MCF 10A (cell line): ENCODE measurements at regions of chr11 and their contacts with region 1.

Region 1: DNA sequence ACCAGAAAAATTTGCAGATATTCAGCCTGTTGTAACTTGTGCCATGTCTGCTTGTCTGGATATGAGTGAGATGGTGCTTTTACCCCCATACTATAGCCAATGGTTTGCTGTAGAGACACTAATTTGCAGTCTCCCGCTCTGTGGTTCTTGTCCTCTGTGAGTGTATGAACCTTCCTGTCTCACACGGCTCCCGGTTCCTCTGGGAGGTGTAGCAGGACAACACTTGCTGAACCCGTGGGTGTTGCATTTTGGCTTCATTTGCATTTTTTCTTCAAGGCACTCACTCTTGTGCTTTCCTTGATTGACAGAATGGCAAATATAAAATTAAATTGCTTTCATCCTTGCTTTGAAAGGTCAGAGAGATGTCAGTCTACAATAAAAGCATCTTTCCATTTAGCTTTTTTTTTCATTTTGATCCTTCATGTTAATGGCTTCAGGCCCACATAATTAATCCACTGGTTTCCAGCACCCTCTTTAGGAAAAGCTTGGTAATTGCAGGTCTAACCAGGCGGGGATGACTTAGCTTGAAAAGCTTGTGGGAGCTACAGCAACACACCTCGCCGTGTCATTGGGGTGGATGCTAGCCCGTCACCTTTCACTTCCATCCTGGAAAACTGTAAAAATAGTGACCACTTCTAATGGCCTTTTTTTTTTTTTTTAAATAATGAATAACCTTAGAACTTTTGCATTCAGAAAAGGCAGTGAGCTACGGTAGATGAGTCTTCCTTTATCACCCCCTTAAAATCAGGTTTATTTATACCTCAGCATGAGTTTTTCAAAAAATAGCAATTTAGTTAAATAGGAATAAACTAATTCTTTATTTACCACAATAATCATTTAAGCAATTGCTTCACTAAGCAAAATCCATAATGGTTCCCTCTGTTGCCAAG is 27.4 kb upstream of the ST14 start:
- DNase-seq: peak; percentile 78
- H3K4me3 Mint-ChIP-seq: no peak overlapping the region
- H3K27ac Mint-ChIP-seq: no peak overlapping the region
- H3K4me1 Mint-ChIP-seq: no peaks in the 10 kb centered on the region
- H3K27me3 Mint-ChIP-seq: no peaks in the 10 kb centered on the region
- CTCF ChIP-seq: peak; percentile 88

Region 2: DNA sequence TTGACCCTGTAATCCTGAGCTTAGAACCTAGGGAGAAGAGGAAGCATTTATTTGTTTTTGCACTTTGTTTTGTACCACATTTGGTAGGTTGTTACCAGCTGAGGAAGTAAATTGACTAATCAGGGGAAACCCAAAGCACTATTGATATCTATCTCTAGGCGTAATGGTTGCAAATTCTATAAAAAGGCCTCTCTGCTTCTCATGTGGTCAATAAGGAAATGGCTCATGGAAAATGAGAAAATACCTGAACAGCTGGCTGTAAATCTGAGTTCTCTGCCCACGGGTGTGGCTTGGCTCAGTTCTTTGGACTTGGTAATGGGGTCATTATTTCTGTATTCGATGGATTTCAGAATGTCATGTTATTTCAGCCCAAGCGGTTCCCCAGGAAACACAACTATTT is 714.2 kb before region 1 on chr11:
- CTCF ChIA-PET with region 1: no interaction called
- POLR2A ChIA-PET with region 1: no interaction called
- intact Hi-C with region 1: no loop called
- DNase-seq: no peak
- H3K4me3 Mint-ChIP-seq: no peak overlapping the region
- H3K27ac Mint-ChIP-seq: no peak overlapping the region
- H3K4me1 Mint-ChIP-seq: no peaks in the 10 kb centered on the region
- H3K27me3 Mint-ChIP-seq: no peaks in the 10 kb centered on the region
- CTCF ChIP-seq: no peak

Region 3: GRCh38 chr11:129853518-129854236 is 278.5 kb before region 1 on chr11:
- CTCF ChIA-PET with region 1: interaction called, 3 read pairs
- POLR2A ChIA-PET with region 1: no interaction called
- intact Hi-C with region 1: loop called (anchors 1 kb)
- DNase-seq: peak; percentile 91
- H3K4me3 Mint-ChIP-seq: peak overlapping the region; percentile 2
- H3K27ac Mint-ChIP-seq: peak overlapping the region; percentile 80
- H3K4me1 Mint-ChIP-seq: peaks cover 37% of the 10 kb centered on the region
- H3K27me3 Mint-ChIP-seq: no peaks in the 10 kb centered on the region
- CTCF ChIP-seq: no peak

Region 4: GRCh38 chr11:129930296-129930695 is 201.9 kb before region 1 on chr11:
- CTCF ChIA-PET with region 1: interaction called, 234 read pairs
- POLR2A ChIA-PET with region 1: interaction called, 9 read pairs
- intact Hi-C with region 1: no loop called
- DNase-seq: peak; percentile 68
- H3K4me3 Mint-ChIP-seq: no peak overlapping the region
- H3K27ac Mint-ChIP-seq: no peak overlapping the region
- H3K4me1 Mint-ChIP-seq: peaks cover 10% of the 10 kb centered on the region
- H3K27me3 Mint-ChIP-seq: no peaks in the 10 kb centered on the region
- CTCF ChIP-seq: no peak

Region 5: DNA sequence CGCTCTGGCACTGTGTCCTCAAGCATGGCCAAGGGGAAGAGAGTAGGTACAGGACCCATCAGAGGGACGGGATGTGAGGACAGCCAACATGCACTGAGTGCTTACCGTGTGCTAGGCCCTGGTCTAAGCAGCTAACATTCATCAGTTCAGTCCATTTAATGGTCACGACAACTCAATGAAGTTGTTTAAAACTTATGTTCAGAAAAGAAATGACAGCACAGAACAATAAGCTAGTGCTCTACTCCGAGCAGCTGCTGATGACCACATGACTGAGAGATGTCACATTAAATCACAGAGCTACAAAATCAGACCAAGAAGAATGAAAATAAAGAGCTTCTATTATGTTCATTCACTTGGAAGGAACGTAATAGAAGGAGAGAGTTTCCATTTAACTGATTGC is 155.9 kb before region 1 on chr11:
- CTCF ChIA-PET with region 1: interaction called, 14 read pairs
- POLR2A ChIA-PET with region 1: interaction called, 3 read pairs
- intact Hi-C with region 1: no loop called
- DNase-seq: no peak
- H3K4me3 Mint-ChIP-seq: no peak overlapping the region
- H3K27ac Mint-ChIP-seq: no peak overlapping the region
- H3K4me1 Mint-ChIP-seq: peaks cover 7% of the 10 kb centered on the region
- H3K27me3 Mint-ChIP-seq: no peaks in the 10 kb centered on the region
- CTCF ChIP-seq: no peak

Region 6: DNA sequence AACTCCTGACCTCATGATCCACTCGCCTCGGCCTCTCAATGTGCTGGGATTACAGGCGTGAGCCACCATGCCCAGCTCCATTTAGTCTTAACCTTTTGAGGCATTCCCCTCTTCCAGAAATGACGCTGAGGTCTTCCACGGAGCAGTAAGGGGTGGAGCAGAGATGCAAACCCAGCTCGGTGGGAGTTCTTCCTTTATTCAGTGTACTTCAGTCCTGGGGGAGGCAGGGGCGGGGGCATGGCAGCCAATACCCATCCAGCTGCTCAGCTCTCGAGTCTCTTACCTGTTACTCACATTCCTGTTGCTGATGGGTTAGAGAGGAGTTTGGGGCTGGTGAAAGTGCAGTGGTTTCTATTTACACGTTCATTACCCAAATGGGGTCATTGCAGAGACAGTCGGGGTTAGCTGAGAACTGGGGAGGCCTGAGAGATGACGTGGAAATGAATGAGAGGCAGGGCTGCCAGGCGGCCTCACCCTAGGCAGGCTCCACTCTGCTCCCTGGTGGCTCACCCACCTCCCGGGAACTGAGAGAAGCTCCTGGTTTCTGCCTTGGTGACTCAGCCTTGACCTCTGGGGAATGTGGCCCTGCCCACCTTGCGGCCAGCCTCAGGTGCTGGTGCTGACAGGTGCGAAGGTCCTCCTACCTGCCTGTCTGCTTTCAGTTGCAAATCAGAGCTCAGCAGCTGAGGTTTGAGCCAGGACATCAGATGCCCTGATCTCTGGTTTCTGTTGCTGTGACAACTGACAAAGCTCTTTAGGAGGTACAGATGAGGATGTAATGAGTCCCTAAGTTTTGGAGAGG is 14.0 kb after region 1 on chr11:
- CTCF ChIA-PET with region 1: interaction called, 81 read pairs
- POLR2A ChIA-PET with region 1: interaction called, 4 read pairs
- intact Hi-C with region 1: no loop called
- DNase-seq: peak; percentile 91
- H3K4me3 Mint-ChIP-seq: no peak overlapping the region
- H3K27ac Mint-ChIP-seq: peak overlapping the region; percentile 65
- H3K4me1 Mint-ChIP-seq: peaks cover 9% of the 10 kb centered on the region
- H3K27me3 Mint-ChIP-seq: no peaks in the 10 kb centered on the region
- CTCF ChIP-seq: peak; percentile 32

Region 7: DNA sequence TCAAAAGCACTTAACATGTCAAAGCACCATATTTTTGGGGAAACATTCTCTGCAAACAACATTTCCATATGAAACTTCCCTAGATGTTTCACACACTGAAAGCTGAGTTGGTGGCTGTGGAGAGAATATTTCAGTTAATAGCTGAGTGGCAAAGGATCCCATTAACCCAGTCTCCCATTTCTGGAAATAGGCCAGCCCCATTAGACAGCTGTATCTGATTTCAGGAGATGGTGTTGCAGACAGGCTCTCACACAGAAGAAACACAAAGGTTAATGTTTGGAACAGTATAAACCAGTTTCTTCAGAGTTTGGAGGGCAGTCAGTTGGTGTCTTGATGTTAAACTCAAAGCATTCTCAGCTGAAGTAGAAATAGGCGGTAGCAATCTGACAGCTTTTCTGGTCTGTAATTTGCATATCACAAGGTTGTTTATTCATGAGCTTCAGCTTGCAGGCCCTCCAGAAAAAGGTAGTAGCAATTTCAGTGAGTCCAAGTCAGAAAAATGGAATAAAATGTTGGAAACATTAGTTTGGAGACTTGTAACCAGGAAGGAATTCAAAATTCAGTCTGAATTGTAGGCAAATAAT is 198.0 kb after region 1 on chr11:
- CTCF ChIA-PET with region 1: no interaction called
- POLR2A ChIA-PET with region 1: no interaction called
- intact Hi-C with region 1: no loop called
- DNase-seq: no peak
- H3K4me3 Mint-ChIP-seq: no peak overlapping the region
- H3K27ac Mint-ChIP-seq: no peak overlapping the region
- H3K4me1 Mint-ChIP-seq: no peaks in the 10 kb centered on the region
- H3K27me3 Mint-ChIP-seq: no peaks in the 10 kb centered on the region
- CTCF ChIP-seq: no peak